PC-9 (cell line): ENCODE measurements at regions of chr15 and their contacts with region 1.

Region 1: DNA sequence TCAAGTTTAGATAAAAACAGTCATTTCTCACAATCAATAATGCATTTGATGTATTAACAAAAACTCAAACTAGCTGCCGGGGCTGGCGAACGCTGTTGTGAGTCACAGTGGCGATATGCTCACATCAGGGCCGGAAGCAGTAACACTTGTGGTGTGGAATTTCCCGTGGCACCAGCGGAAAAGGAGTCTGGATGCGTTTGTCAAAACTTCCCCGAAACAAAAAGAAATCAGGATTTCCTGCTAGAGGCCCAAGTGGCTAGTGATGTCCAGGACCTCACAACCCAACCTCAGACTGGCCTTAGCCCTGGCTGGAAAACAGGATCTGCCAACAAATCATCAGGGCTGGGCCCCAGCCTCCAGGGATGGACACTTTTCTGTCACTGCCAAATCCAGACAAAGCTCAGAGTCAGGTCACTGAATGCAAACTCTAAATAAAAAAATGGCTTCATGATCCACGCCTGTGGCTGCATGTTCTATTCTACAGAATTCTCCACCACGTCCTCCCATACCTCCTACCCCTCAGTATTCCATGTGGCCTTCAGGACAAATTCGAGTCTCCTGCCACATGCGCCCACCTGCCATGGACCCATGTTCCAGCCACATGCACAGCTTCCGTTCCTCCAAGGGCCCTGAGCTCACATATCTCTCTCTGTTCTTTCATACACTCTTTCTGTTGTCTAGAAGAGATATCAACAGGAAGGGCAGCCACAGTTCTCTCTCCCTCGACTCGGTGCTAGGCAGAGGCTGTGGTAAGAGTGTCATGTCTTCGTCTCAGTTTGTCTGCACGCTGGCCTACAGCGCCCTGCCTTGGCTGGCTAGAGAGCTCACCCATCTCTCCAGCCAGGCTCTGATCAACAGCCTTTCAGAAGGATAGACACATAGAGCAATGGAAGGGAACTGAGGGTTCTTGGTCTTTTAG is 35.4 kb downstream of the EHD4 start:
- DNase-seq: no peak
- H3K4me3 ChIP-seq: no peak overlapping the region
- H3K27ac ChIP-seq: no peak overlapping the region
- H3K4me1 ChIP-seq: peaks cover 30% of the 10 kb centered on the region
- H3K27me3 ChIP-seq: no peaks in the 10 kb centered on the region
- CTCF ChIP-seq: no peak

Region 2: GRCh38 chr15:41914411-41914810 is 22.5 kb before region 1 on chr15:
- CTCF ChIA-PET with region 1: no interaction called
- POLR2A ChIA-PET with region 1: no interaction called
- intact Hi-C with region 1: no loop called
- DNase-seq: no peak
- H3K4me3 ChIP-seq: no peak overlapping the region
- H3K27ac ChIP-seq: no peak overlapping the region
- H3K4me1 ChIP-seq: peaks cover 10% of the 10 kb centered on the region; the same call in 1 of the 2 replicates
- H3K27me3 ChIP-seq: no peaks in the 10 kb centered on the region
- CTCF ChIP-seq: no peak

Region 3: DNA sequence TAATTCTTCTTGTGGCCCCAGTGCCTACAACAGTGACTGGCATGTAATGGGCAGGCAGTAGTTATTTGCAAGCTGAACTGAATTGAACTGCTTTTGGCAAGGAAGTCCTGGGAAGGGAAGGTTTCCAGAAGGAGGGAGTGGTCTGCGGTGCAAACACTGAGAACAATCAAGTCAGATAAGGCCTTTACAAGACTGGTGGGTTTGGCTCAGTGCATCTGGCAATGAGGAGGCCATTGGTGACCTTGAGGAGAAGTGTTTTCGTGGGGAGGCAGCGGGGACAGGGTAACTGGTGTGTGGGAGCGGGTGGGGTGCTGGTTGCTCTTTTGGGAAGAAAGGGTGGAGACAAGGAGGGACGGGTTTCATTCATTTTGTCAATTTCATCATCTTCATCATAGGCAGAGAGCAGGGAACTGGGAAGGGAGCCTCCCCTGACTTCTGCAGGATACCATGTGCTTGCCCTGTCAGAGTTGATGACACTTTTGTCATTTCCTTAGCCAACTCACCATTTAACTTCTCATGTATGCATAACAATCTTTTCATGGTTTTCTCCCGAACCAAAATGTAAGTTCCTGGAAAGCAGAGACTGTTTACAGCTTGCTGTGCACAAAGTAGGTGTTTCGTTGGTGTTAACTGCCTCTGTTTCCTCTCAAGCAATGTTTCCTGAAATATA is 43.9 kb after region 1 on chr15:
- CTCF ChIA-PET with region 1: no interaction called
- POLR2A ChIA-PET with region 1: no interaction called
- intact Hi-C with region 1: no loop called
- DNase-seq: no peak
- H3K4me3 ChIP-seq: no peak overlapping the region
- H3K27ac ChIP-seq: no peak overlapping the region
- H3K4me1 ChIP-seq: peaks cover 11% of the 10 kb centered on the region
- H3K27me3 ChIP-seq: no peaks in the 10 kb centered on the region
- CTCF ChIP-seq: no peak

Region 4: GRCh38 chr15:42955518-42955917 is 1018.6 kb after region 1 on chr15:
- CTCF ChIA-PET with region 1: no interaction called
- POLR2A ChIA-PET with region 1: interaction called, 11 read pairs
- intact Hi-C with region 1: no loop called
- DNase-seq: no peak
- H3K4me3 ChIP-seq: no peak overlapping the region
- H3K27ac ChIP-seq: no peak overlapping the region
- H3K4me1 ChIP-seq: no peaks in the 10 kb centered on the region; the same call in 1 of the 2 replicates
- H3K27me3 ChIP-seq: no peaks in the 10 kb centered on the region
- CTCF ChIP-seq: no peak